Ascending aorta (tissue), 2 donors: ENCODE measurements at regions of chr16 and their contacts with region 1.

Region 1: DNA sequence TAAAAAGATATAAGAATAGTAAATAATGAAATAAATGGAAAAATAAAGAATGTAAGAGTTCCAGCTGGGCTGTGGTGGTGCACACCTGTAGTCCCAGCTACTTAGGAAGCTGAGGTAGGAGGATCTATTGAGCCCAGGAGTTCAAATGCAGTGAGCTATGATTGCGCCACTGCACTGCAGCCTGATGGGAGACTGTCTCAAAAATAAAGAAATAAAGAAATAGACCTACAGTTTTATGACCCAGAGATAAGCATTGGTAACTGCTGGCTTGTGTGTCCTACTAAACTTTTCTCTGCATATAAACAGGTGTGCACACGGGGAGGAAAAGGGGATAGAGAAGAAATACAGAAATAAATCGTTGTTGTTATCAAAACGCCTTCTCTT is 7.8 kb upstream of the PDP2 start:
- DNase-seq: no peak
- H3K4me3 ChIP-seq: peak overlapping the region; percentile 19 to 64
- H3K27ac ChIP-seq: peak overlapping the region; percentile 47 to 79
- H3K4me1 ChIP-seq: peaks cover 3 to 6% of the 10 kb centered on the region in 2 donors
- H3K27me3 ChIP-seq: no peaks in the 10 kb centered on the region
- CTCF ChIP-seq: no peak

Region 2: GRCh38 chr16:66406534-66407221 is 465.9 kb before region 1 on chr16:
- intact Hi-C with region 1: loop called (anchors 2 kb)
- DNase-seq: peak in 1 of 2 donors; percentile 92
- H3K4me3 ChIP-seq: peak overlapping the region; percentile 65 to 69
- H3K27ac ChIP-seq: no peak overlapping the region
- H3K4me1 ChIP-seq: peaks cover 0 to 5% of the 10 kb centered on the region in 2 donors
- H3K27me3 ChIP-seq: no peaks in the 10 kb centered on the region
- CTCF ChIP-seq: peak; percentile 82 to 91 (median 87)

Region 3: DNA sequence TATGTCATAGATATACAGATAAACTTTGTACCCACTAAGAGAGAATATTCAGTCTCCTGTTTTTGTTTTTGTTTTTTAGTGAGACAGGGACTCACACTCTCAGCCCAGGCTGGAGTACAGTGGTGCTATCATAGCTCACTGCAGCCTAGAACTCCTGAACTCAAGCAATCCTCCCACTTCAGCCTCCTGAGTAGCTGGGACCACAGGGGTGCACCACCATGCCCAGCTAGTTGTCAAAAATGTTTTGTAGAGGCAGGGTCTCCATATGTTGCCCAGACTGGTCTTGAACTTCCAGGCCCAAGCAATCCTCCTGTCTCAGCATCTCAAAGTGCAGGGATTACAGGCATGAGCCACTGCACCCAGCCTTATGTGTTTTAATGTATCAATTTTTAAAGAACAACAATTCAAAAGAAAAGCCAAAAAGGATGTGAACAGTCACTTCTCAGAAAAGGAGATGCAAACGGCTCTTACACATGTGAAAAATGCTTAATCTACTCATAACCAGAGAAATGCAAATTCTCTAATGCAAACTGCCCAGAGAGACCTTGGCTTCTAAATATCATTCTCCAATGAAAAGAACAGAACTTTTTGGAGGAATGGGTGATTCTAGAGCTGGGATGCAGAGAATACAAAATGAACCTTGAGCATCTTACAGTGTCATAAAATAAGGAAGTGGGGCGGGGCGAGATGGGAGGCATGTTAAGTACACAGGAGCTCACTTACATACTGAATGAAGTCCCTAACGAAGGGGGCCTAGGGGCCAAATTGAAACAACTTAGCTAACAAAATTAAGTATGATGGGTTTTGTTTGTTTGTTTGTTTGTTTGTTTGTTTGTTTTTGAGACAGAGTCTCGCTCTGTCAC is 275.3 kb before region 1 on chr16:
- intact Hi-C with region 1: no loop called
- DNase-seq: no peak
- H3K4me3 ChIP-seq: no peak overlapping the region
- H3K27ac ChIP-seq: no peak overlapping the region
- H3K4me1 ChIP-seq: no peaks in the 10 kb centered on the region
- H3K27me3 ChIP-seq: no peaks in the 10 kb centered on the region
- CTCF ChIP-seq: no peak

Region 4: GRCh38 chr16:66728117-66728787 is 144.3 kb before region 1 on chr16:
- intact Hi-C with region 1: loop called (anchors 2 kb)
- DNase-seq: no peak
- H3K4me3 ChIP-seq: no peak overlapping the region
- H3K27ac ChIP-seq: no peak overlapping the region
- H3K4me1 ChIP-seq: no peaks in the 10 kb centered on the region
- H3K27me3 ChIP-seq: no peaks in the 10 kb centered on the region
- CTCF ChIP-seq: peak; percentile 44 to 66 (median 46)

Region 5: DNA sequence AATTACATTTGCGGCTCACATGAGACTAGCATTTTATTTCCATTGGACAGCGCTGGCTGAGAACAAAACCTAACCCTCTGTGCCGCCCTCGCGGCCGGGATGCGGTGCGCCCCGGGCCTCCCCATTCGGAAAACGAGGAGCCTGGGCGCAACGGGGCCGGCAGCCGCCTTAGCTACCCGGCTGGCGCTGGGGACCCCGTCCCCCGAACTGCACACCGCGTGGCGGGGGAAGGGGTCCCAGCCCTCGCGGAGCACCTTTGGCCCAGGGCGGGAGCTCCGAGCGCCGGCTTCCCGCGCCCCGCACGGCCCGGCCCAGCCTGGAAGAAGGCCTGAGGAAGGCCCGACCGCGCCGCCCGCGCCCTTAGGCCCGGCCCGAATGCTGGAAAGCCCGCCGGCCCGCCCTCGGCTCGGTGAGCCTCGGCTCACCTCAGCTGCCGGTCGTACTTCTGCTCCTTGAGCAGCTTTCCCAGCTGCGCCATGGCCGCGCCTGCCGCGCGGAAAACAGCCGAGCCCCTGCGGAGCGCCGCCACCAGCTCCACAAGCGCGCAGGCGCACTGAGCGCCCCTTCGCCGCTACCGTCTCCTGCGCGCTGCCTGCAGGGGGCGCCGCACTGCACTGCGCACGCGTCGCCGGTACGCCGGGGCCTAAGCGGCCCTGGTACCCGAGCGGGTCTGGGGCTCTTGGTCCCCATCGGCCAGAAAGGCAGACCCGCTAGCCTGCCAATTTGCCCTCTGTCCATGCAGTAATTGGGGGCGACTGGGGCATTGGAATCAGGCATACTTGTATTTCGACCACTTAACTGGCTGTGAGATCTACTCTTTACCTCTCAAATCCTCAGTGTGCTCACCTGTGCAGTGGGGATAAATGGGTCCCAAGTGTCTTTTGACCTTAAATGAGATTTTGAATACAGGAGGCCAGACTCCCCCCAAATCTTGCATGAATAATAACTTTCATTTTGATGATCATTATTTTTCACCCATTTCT is 41.8 kb before region 1 on chr16 and contains the start of gene NAE1:
- intact Hi-C with region 1: loop called (anchors 1 kb)
- DNase-seq: peak; percentile 11 to 89
- H3K4me3 ChIP-seq: peak within 1 kb of the TSS; percentile 76 to 77
- H3K27ac ChIP-seq: peak within 1 kb of the TSS; percentile 85 to 87
- H3K4me1 ChIP-seq: peaks cover 0 to 17% of the 10 kb centered on the region in 2 donors
- H3K27me3 ChIP-seq: no peaks in the 10 kb centered on the region
- CTCF ChIP-seq: peak; percentile 96 to 98 (median 97)
- total RNA-seq, gene NAE1: 8.6 TPM